Breast epithelium (tissue), 4 donors: ENCODE measurements at regions of chr7 and their contacts with region 1.

Region 1: DNA sequence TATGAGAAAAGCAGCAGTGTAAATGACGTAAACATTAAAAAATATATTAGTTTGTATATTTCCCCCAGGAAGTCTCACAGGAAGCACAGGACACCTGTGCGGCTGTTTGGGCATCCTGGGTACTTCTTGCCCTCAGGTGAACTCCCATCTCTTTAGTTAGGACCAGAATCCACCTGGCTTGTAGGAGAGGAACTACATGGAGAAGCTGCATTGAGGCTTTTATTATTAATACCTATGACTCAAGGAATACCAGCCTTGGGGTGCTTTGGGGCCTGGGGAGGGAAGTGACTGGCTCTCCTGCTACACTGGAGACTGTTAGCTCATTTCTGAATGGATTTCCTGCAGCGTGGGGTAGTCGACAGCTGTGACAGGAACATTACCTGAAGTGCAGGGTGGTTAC is 40.0 kb upstream of the GSDME start:
- DNase-seq: no peak
- H3K4me3 ChIP-seq: no peak overlapping the region
- H3K27ac ChIP-seq: no peak overlapping the region
- H3K4me1 ChIP-seq: no peaks in the 10 kb centered on the region
- H3K27me3 ChIP-seq: no peaks in the 10 kb centered on the region
- CTCF ChIP-seq: no peak
- POLR2A ChIP-seq: no peak

Region 2: GRCh38 chr7:24762771-24763170 is 34.5 kb before region 1 on chr7:
- intact Hi-C with region 1: loop called (anchors 1 kb)
- DNase-seq: no peak
- H3K4me3 ChIP-seq: no peak overlapping the region
- H3K27ac ChIP-seq: no peak overlapping the region
- H3K4me1 ChIP-seq: no peaks in the 10 kb centered on the region
- H3K27me3 ChIP-seq: no peaks in the 10 kb centered on the region
- CTCF ChIP-seq: no peak
- POLR2A ChIP-seq: no peak

Region 3: DNA sequence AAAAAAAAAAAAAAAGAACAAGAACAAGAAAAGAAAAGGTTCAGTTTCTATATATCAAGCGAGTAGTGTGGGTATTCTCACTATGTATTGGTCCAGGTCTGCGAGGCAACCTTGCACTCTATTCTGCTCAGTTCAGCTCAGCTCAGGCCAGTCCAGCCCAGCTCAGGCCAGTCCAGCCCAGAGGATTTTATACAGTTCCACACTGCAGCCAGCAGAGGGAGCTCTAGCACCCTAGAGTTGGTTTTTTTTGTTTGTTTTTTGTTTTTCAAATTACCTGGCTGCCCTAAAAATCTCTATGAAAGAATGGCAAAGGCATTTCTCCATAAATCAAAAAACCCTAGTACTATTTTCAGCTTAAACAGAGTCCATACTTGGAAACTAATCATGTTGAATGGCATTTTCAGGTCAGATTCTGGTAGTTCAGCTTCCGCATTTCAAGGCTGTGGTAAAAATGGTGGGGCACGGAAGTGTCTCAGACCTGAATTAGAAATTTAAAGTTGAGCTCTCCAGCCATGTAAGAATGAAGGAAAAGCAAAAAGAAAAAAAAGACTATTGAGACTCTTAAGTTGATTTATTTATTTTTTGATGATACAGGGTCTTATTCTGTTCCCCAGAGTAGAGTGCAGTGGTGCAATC is 15.2 kb after region 1 on chr7:
- intact Hi-C with region 1: loop called (anchors 1 kb)
- DNase-seq: no peak
- H3K4me3 ChIP-seq: no peak overlapping the region
- H3K27ac ChIP-seq: no peak overlapping the region
- H3K4me1 ChIP-seq: no peaks in the 10 kb centered on the region
- H3K27me3 ChIP-seq: no peaks in the 10 kb centered on the region
- CTCF ChIP-seq: peak; percentile 65 to 75 (median 74)
- POLR2A ChIP-seq: no peak